Right ventricle myocardium superior (tissue), 1 donor: ENCODE measurements at regions of chr1 and their contacts with region 1.

Region 1: DNA sequence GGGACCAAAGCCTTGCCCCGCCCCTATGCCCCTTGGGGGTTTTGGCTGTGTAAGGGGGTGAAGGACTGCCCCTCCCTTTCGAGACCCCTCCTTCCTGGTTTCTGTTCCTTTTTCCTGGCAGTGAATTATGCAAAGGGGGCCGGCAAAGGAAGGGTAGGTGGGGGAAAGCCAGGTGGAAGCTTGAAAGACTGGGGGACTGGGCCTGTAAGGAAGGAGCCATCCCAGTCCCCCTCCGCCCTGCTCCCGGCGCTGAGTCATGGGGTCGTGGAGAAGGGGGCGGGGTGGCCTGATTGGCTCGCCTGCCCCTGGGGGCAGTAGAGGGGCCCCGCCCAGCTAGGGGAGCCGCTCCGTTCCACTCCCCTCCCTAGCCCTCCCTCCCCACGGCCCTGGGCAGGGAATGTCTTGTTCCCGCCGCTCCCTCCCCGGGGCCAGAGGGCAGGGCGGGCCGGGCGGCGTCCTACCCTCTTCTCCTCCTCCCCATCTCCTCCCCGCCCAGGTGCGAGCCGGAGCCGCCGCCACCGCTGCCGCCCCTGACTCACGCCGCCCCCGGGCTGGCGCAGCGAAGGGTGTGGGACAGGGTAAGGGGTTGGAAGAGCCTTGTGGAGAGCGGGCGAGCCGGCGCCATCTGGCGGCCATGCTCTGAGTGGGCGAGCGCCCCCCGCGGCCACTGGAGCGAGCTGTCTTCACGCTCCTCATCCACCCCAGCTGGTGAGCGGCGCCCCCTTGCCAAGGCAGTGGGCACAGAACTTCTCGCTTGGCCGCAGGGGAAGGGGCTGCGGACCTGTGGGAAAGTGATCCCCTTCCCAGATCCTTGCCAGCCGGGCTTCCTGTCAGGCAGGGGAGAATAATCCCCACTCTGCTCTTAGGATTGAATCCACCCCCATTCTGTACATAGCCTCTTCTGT is 14.7 kb downstream of the ZBTB7B start:
- DNase-seq: peak; percentile 94
- ATAC-seq: peak; percentile 94

Region 2: GRCh38 chr1:154288661-154289060 is 728.6 kb before region 1 on chr1:
- intact Hi-C with region 1: no loop called
- DNase-seq: no peak
- ATAC-seq: no peak

Region 3: DNA sequence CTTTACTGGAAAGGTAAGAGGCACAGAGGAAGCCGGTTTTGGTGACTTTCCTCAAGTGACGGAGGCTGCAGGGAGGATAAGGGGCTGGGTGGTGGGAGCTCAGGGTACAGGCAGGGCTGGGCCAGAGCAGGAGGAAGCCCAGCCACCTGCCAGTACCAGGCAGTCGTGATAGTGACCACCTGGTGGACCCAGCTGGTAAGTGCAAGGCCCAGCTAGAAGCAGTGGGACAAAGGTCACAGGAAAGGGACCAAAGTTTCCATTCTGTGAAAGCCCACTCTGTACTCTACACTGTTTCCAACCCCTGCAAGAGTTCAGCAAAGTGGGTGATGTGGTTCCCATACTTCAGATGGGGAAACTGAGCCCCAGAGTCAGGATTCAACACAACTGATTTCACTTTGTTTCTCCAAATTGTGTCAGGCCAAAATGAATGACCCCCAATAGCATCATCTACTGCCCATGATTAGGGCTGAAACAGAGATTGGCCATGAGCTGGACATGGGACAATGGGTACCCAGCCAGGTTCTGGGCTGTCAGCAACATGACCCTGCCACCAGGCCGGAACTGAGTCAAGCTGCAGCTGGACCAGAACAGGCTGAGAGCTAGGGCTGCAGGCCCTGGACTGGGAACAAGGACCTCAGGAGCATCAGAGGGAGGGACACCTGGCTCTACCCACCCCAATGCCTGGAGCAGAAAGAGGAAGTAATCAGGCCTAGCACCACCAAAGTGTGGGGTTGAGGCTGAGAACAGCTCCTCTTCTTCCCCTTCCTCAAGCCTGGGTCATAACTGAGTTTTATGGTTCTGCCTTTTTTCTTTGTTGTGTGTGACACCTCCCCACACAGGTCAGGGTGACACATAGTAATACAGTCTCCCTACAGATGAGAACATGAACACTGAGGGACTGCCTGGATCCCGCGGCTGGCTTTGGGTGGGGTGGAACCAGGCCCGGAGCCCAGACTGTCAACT is 197.4 kb before region 1 on chr1:
- intact Hi-C with region 1: no loop called
- DNase-seq: no peak
- ATAC-seq: peak; percentile 3

Region 4: GRCh38 chr1:154974063-154974807 is 43.1 kb before region 1 on chr1 and contains the start of gene CKS1B:
- intact Hi-C with region 1: loop called (anchors 5 kb)
- DNase-seq: peak; percentile 97
- ATAC-seq: peak; percentile 85
- total RNA-seq, gene CKS1B: 15.5 TPM

Region 5: DNA sequence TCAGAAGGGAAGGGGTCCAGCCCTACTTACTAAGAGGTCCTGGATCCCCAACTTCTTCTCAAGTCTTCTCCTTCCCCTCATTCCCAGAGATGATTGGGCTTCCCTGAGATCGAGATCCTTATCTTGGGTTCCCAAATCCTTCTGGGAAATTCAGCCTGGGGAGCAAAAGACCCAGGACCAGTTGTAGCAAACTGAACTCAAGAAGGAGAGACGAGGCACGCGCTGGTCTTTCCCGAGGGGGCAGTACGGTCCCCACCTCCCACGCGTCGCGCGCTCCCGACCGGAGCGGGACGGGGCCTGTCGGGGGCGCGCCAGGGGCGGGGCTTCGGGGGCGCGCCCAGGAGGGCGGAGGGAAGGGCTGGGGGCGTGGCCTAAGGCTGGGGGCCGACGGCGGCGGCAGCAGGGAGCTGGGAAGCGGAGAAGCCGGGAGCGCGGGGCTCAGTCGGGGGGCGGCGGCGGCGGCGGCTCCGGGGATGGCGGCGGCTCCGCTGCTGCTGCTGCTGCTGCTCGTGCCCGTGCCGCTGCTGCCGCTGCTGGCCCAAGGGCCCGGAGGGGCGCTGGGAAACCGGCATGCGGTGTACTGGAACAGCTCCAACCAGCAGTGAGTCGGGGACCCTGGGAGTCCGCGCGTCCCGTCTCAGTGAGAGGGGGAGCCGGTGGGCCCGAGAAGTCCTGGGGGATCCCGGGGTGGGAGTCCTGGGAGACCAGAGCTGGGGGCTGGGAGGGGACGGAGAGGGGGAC is 61.3 kb after region 1 on chr1 and contains the start of gene EFNA3:
- intact Hi-C with region 1: no loop called
- DNase-seq: peak; percentile 80
- ATAC-seq: peak; percentile 84
- total RNA-seq, gene EFNA3: 0.75 TPM

Region 6: DNA sequence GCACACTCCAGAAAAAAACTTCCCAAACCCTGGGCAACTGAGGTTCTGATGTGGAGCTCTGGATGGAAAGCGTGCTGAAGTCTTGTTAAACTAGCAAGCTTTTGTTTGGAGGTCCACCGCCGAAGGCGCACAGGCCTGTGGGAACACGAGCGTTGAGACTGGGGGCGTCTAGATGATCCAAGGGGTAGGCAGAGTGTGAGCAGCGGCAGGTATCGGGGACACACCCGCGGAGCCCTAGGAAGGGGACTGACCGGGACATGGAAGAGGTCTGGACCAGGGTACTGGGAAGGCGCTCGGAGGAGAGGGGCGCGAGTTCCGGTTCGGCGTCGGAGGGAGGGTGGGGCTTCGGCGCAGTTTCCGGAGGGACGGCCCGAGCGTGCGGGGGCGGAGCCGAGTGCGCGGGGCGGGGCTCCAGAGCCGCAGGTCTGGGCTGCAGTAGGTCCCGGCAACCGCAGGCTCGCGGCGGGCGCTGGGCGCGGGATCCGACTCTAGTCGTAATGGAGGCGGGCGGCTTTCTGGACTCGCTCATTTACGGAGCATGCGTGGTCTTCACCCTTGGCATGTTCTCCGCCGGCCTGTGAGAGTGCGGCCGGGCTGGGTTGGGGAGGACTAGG is 118.2 kb after region 1 on chr1 and contains the start of gene SLC50A1:
- intact Hi-C with region 1: no loop called
- DNase-seq: peak; percentile 97
- ATAC-seq: peak; percentile 94
- total RNA-seq, gene SLC50A1: 7.1 TPM